Tibial artery (tissue), 4 donors: ENCODE measurements at regions of chr7 and their contacts with region 1.

Region 1: DNA sequence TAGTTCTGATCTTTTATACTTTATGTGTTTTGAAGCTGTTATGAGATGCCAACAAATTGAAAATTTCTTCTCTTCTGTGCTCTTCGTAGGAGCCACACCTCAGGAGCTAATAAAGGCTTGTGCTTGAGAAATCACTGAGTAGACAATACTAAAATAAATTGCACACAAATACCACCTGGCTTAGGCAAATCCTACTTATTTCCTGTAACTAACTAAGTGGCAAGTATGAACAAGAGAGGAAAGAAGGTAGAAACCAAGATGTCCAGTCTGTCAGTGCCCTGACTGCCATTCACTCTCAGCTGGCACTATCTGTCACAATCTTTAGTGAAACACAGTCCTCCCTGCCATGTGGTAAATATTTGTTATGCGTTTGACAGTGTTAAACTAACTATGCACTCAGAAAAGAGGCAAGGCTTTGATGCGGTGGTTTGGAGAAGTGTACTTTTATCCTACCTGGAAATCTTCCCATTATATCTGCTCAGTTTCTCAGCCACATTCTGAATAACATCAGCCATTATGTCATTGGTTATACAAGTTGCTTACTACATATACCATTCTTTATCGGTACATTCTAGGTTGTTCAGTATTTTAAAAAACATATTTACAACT is 293.4 kb upstream of the VWC2 start:
- DNase-seq: no peak
- H3K4me3 ChIP-seq: no peak overlapping the region
- H3K27ac ChIP-seq: no peak overlapping the region
- H3K4me1 ChIP-seq: no peaks in the 10 kb centered on the region
- H3K27me3 ChIP-seq: no peaks in the 10 kb centered on the region
- CTCF ChIP-seq: no peak

Region 2: GRCh38 chr7:49166441-49166840 is 313.6 kb before region 1 on chr7:
- intact Hi-C with region 1: no loop called
- DNase-seq: no peak
- H3K4me3 ChIP-seq: no peak overlapping the region
- H3K27ac ChIP-seq: no peak overlapping the region
- H3K4me1 ChIP-seq: no peaks in the 10 kb centered on the region
- H3K27me3 ChIP-seq: no peaks in the 10 kb centered on the region
- CTCF ChIP-seq: no peak

Region 3: DNA sequence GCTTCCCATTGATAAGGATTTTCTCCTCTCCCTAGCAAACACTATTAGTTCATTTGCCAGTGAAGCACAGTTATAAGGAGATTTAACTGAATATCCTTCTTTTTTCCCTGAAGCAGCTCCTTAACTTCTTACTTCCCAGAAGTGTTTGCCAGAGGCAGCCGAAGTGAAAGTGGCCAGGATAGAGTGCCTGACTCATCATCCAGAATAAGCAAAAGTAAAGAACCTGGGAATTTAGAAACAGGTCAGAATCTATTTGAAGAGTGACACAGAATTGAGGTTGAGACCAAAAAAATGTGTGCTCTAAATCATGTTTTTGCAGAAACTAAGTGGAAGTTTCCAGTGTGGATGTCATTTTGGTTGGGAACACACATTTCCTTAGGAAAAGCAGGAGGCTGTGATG is 43.8 kb after region 1 on chr7:
- intact Hi-C with region 1: loop called (anchors 2 kb)
- DNase-seq: no peak
- H3K4me3 ChIP-seq: no peak overlapping the region
- H3K27ac ChIP-seq: no peak overlapping the region
- H3K4me1 ChIP-seq: no peaks in the 10 kb centered on the region
- H3K27me3 ChIP-seq: no peaks in the 10 kb centered on the region
- CTCF ChIP-seq: no peak